ENCODE measurements at regions of chrX and their contacts with region 1.

Region 1: GRCh38 chrX:48021026-48021900 is 14.5 kb downstream of the SPACA5 start:
- DNase-seq: peak; percentile 80 to 93 (median 91)
- ATAC-seq: peak; percentile 90 to 93
- H3K4me3 ChIP-seq: peak overlapping the region; percentile 93
- H3K27ac ChIP-seq: peak overlapping the region; percentile 100
- H3K4me1 ChIP-seq: no peaks in the 10 kb centered on the region
- H3K27me3 ChIP-seq: no peaks in the 10 kb centered on the region

Region 2: DNA sequence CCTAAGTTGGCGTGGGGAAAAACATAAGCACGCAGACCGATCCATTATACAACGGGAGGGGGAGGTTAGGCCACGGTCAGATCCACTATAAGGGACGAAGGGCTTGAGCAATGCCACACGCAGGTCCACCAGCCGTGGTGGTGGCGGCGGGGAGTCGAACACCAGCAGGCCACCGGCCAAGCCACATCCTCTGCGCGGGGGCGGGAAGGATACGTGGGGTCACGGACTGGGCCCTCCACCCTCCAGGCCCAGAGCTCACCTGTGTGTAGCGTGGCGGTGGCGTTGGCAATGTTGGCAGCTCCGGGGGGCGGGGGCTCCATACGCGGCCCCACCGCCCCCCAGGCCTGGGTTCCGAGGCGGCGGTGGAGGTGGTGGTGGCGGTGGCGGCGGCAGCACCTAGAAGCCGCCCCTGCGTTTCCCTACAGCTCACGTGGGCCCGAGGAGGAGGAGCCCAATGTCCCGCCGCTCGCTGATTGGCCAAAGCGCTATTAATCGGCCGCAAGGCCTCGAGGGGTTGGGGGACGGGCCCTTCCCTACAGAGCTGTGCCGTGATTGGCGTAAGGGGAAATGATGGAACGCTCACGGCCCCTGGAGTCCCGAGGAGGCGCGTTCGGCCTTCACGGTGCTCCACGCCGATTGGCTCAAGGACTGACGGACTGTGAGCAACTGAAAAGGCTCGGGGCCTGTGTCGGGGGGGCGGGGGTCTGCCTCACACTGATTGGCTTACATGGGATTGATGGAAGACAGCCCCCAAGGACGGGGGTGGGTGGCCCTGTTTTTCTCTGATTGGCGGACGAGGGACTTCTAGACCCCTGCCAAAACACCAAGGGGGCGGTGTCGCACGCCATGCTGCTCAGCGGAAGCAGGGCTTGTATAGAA is 370.9 kb before region 1 on chrX and contains the start of gene ELK1:
- intact Hi-C with region 1: loop called in 1 of 4 experiments (anchors 10 kb)
- DNase-seq: peak; percentile 95 to 97 (median 97)
- ATAC-seq: peak; percentile 98
- H3K4me3 ChIP-seq: peak within 1 kb of the TSS; percentile 70
- H3K27ac ChIP-seq: peak within 1 kb of the TSS; percentile 83
- H3K4me1 ChIP-seq: peaks cover 10% of the 10 kb centered on the region
- H3K27me3 ChIP-seq: no peaks in the 10 kb centered on the region
- total RNA-seq, gene ELK1: 24.1 to 32.3 (median 25.6) TPM

Region 3: DNA sequence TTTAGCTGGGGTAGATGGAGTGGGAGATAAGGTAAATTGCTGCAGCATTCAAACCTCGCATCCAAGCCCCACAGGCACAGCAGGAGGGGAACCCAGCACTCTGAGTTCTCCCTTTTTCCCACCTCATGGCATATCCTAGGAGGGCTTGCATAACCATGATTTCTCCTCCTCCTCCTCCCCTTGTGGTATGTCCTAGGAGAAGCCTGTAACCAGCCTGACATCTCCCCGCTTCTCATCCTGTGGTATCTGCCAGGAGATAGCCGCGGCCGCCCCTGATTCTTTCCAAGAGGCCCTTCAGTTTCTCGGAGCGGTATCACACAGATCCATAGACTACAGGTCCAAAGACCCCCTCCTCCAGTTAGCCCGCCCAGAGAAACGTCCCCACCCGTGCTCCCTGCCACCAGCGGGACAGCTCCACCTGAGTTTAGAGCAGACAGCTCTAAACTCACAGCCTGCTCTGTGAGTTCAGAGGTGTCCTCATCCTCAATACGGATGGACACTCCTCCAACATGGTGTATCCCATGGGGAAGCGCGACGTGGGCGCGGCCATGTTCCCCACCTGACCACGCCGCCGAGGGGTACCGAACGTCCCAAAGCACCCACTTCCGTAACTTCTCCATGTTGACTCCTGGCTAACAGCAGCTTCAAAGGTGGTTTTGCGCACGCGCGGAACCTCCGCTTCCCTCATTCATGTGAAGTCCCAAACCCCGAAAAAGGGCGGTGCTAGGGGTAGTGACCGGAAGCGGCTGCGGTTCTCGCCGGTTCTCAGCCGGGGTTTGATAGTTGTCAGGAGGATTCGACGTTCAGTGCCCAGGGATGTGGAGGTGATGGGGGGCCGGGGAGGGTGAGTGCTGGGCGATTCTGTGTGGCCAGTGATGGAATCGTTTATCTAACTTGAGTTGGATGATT is 184.8 kb before region 1 on chrX and contains the start of gene ZNF81:
- intact Hi-C with region 1: loop called in 1 of 4 experiments (anchors 10 kb)
- DNase-seq: peak; percentile 97 to 98 (median 98)
- ATAC-seq: peak; percentile 100
- H3K4me3 ChIP-seq: peak within 1 kb of the TSS; percentile 59
- H3K27ac ChIP-seq: peak within 1 kb of the TSS; percentile 79
- H3K4me1 ChIP-seq: no peaks in the 10 kb centered on the region
- H3K27me3 ChIP-seq: no peaks in the 10 kb centered on the region
- total RNA-seq, gene ZNF81: 6.2 to 12.4 (median 9.8) TPM

Region 4: DNA sequence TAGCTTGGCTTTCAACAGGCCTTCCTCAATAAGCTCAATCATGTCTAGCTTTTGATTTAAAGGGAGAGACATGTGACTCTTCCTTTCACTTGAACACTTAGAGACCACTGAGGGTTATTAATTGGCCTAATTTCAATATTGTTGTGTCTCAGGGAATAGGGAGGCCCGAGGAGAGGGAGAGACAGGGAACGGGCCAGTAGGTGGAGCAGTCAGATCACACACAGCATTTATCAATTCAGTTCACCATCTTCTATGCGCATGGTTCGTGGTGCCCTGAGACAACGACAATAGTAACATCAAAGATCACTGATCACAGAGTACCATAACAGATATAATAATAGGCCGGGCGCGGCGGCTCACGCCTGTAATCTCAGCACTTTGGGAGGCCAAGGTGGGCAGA is 166.8 kb before region 1 on chrX:
- intact Hi-C with region 1: loop called in 2 of 4 experiments (anchors 5 kb)
- DNase-seq: peak; percentile 27 to 47 (median 45)
- ATAC-seq: peak; percentile 68 to 78
- H3K4me3 ChIP-seq: no peak overlapping the region
- H3K27ac ChIP-seq: no peak overlapping the region
- H3K4me1 ChIP-seq: no peaks in the 10 kb centered on the region
- H3K27me3 ChIP-seq: no peaks in the 10 kb centered on the region

Region 5: GRCh38 chrX:47880927-47881326 is 140.3 kb before region 1 on chrX:
- intact Hi-C with region 1: no loop called
- DNase-seq: no peak
- ATAC-seq: no peak
- H3K4me3 ChIP-seq: no peak overlapping the region
- H3K27ac ChIP-seq: no peak overlapping the region
- H3K4me1 ChIP-seq: no peaks in the 10 kb centered on the region
- H3K27me3 ChIP-seq: no peaks in the 10 kb centered on the region

Region 6: GRCh38 chrX:48720577-48721250 is 699.5 kb after region 1 on chrX:
- intact Hi-C with region 1: no loop called
- DNase-seq: no peak
- ATAC-seq: no peak
- H3K4me3 ChIP-seq: no peak overlapping the region
- H3K27ac ChIP-seq: no peak overlapping the region
- H3K4me1 ChIP-seq: no peaks in the 10 kb centered on the region
- H3K27me3 ChIP-seq: no peaks in the 10 kb centered on the region

Measured in right cardiac atrium (tissue), 5 donors.